Sciatic nerve (tissue), 2 donors: ENCODE measurements at regions of chr14 and their contacts with region 1.

Region 1: DNA sequence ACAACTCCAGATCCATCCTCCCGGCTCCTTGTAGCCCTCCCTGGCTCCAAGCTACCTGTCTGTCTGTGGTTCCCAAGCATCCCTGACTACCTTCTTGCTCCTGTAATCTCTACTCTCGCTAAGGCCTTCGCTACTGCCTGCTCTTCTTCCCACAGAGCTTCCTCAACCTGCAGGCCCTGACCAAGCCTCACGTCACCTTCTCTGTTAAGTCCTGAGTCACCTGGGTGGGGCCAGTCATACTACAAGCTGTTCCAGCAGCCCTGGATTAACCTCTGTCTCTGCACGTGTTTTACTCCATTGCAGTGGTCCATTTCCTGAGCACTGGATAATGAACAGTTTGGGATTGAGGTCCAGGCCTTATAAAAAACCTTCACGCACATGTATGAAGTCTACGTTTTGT is 770.7 kb downstream of the BCL11B start:
- DNase-seq: no peak
- ATAC-seq: no peak

Region 2: DNA sequence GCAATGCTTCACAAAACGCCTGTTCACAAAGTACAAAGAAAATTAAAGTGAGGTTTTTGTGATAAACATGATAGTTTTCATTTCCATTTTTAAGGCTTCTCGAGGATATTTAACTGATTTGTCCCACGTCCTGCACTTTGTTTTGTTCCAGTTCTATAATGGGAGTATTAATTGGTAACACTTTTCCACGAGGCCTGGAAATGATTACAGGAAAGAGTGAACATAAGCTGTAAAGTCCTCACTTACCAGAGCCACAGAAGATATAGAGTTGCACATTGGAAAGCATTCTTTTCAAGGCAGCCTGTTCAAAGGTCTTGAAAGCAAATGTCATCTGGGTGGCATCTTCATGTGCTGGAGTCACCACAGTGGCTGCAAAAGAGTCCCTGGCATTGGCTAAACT is 465.9 kb before region 1 on chr14:
- intact Hi-C with region 1: no loop called
- DNase-seq: no peak
- ATAC-seq: no peak

Region 3: DNA sequence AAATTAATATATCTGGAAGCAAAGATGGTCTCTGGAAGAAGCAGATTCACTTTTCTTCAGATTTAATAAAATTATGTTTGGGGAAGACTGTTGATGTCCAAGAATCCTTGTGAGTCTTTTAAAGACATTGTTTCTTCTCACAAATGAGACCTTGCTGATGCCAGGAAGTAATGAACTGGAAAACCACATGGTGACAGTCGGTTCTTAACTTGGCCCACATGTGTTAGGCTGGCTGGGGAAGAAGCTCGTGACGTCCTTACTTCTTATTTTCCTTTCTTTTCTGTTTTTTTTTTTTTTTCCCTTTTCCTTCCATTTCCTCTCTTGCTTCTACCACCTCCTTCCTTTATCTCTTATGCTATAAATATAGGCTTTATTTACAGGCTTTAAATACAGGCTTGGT is 179.5 kb before region 1 on chr14:
- intact Hi-C with region 1: no loop called
- DNase-seq: no peak
- ATAC-seq: no peak

Region 4: DNA sequence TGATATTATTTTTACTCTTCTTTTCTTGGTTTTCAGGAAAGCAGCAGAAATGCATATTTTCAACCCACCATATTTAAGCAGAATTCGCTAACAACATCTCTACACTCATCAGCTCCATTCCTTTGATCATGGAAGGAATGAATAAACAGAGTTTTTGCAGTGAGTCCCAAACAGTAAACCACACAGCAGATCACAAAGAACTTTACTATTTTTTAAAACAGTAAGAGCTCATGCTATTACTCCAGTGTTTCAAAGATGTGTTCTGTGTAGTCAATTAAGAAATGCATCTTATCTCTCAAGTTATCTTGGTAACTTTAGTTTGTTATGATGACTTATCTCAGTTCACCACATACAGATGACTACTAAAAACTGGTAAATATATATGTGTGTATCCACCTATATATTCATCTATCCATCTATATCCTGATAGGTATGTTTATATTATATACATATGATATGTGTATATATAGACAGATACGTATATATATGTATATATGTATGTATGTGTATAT is 72.8 kb before region 1 on chr14:
- intact Hi-C with region 1: loop called (anchors 5 kb)
- DNase-seq: no peak
- ATAC-seq: no peak